Kidney (tissue), 22 donors: ENCODE measurements at regions of chr20 and their contacts with region 1.

Region 1: GRCh38 chr20:5135363-5136012 is 8.7 kb downstream of the CDS2 start:
- DNase-seq: no peak
- H3K4me3 ChIP-seq: no peak overlapping the region
- H3K27ac ChIP-seq: peak overlapping the region in 1 of 2 donors; percentile 17
- H3K4me1 ChIP-seq: peaks cover 0 to 5% (median 3%) of the 10 kb centered on the region in 3 donors
- H3K27me3 ChIP-seq: no peaks in the 10 kb centered on the region
- CTCF ChIP-seq: no peak

Region 2: DNA sequence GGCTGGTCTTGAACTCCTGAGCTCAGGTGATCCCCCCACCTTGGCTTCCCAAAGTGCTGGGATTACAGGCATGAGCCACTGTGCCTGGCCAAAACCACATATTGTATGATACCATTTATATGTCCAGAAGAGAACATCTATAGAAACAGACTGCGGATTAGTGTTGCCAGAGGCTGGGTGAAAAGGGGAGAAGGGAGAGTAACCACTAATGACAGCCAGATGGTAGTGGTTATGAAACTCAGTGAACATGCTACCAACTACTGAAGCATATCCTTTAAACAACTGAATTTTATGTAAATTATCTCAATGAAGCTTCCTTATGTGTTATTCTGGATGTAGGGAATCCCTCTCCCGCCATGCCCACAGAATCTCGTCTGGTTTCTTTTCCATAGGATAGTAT is 149.8 kb before region 1 on chr20:
- intact Hi-C with region 1: no loop called
- DNase-seq: no peak
- H3K4me3 ChIP-seq: no peak overlapping the region
- H3K27ac ChIP-seq: no peak overlapping the region
- H3K4me1 ChIP-seq: no peaks in the 10 kb centered on the region
- H3K27me3 ChIP-seq: no peaks in the 10 kb centered on the region
- CTCF ChIP-seq: no peak

Region 3: DNA sequence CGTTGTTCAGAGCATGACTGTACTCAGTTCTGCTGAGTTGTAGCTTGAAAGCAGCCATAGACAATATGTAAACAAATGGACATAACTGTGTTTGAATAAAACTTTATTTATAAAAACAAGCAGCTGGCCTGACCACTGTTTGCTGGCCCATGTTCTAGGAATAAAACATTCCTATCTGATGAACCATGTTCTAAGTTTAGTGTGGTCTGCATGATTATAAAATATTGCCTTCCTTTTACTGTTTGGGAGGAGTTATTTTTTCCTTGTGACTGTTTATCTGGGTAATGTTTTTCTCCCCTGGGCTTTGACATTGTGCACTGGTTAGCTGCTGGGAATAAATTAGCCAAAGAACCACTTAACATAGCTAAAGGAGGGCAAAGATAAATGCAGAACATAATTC is 46.5 kb after region 1 on chr20:
- intact Hi-C with region 1: loop called (anchors 10 kb)
- DNase-seq: peak in 2 of 5 donors; percentile 5 to 32
- H3K4me3 ChIP-seq: no peak overlapping the region
- H3K27ac ChIP-seq: no peak overlapping the region
- H3K4me1 ChIP-seq: no peaks in the 10 kb centered on the region
- H3K27me3 ChIP-seq: no peaks in the 10 kb centered on the region
- CTCF ChIP-seq: no peak